Sigmoid colon (tissue), 7 donors: ENCODE measurements at regions of chr6 and their contacts with region 1.

Region 1: DNA sequence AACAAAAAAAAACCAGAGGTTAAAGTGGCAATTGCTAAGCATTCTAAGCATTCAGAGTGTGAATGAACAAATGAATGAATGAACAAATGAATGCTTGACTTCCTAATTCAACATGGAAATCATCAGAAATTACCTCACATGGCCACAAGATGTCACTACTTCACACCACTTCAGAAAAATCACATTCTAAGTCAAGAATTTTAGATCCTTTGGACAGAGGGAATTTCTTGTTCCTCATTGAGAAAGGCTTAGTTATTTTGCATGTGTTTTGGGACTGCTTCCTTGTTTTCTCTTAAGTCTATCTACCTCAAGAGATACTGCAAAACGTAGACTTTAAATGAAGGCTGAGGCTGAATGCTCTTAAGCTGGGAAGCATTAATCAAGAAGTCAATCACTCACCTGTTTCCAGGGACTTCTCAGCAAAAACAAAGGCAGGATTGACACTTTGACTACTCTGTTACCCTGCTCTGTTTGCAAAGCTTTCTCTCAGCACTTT is 120.2 kb downstream of the MBOAT1 start:
- DNase-seq: no peak
- H3K4me3 ChIP-seq: no peak overlapping the region
- H3K27ac ChIP-seq: no peak overlapping the region
- H3K4me1 ChIP-seq: peaks cover 0 to 10% (median under 1%) of the 10 kb centered on the region in 4 donors
- H3K27me3 ChIP-seq: no peaks in the 10 kb centered on the region
- CTCF ChIP-seq: peak; percentile 63 to 83 (median 70)
- EP300 ChIP-seq: no peak
- POLR2A ChIP-seq: no peak

Region 2: DNA sequence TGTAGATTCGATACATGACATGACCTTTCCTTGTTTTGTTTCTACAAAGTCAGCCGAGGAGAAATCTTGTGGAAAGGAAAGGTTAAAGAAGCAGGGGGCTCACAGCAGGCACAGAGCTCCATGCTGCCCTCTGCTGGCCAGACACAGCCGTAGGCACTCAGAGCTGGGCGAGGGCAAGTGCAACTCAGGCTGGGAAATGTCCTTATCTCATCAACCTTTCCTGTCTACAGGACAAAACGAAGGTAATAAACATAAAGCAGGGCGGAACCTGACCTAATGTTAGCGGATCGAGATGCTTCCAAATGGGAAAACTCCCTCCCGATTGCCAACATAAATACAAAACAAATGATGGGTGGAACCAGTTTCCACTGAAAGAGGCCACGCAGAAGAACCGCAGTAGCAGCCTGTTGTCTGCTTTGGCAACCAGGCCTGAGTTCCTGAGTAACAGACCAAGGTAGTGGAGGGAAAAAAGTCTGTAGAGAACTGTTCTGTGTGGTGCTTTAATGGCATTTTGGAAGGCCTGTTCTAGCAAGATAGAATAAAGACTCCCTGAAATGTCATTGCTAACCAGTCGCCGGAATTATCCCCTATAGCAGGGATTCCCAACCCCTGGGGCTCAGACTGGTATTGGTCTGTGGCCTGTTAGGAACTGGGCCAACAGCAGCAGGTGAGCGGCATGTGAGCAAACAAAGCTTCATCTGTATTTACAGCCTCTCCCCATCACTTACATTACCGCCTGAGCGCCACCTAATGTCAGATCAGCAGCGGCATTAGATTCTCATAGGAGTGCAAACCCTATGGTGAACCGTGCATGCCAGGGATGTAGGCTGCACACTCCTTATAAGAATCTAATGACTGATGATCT is 34.9 kb after region 1 on chr6:
- intact Hi-C with region 1: loop called (anchors 1 kb)
- DNase-seq: peak; percentile 80
- H3K4me3 ChIP-seq: no peak overlapping the region
- H3K27ac ChIP-seq: peak overlapping the region; percentile 29 to 79 (median 61)
- H3K4me1 ChIP-seq: peaks cover 0 to 50% (median 20%) of the 10 kb centered on the region in 4 donors
- H3K27me3 ChIP-seq: no peaks in the 10 kb centered on the region
- CTCF ChIP-seq: peak; percentile 73 to 95 (median 86)
- EP300 ChIP-seq: no peak
- POLR2A ChIP-seq: no peak

Region 3: GRCh38 chr6:20291764-20292580 is 199.9 kb after region 1 on chr6:
- intact Hi-C with region 1: loop called (anchors 5 kb)
- DNase-seq: peak; percentile 84
- H3K4me3 ChIP-seq: no peak overlapping the region
- H3K27ac ChIP-seq: no peak overlapping the region
- H3K4me1 ChIP-seq: peaks cover 0 to 6% (median 0%) of the 10 kb centered on the region in 4 donors
- H3K27me3 ChIP-seq: no peaks in the 10 kb centered on the region
- CTCF ChIP-seq: peak; percentile 75 to 95 (median 88)
- EP300 ChIP-seq: no peak
- POLR2A ChIP-seq: no peak

Region 4: DNA sequence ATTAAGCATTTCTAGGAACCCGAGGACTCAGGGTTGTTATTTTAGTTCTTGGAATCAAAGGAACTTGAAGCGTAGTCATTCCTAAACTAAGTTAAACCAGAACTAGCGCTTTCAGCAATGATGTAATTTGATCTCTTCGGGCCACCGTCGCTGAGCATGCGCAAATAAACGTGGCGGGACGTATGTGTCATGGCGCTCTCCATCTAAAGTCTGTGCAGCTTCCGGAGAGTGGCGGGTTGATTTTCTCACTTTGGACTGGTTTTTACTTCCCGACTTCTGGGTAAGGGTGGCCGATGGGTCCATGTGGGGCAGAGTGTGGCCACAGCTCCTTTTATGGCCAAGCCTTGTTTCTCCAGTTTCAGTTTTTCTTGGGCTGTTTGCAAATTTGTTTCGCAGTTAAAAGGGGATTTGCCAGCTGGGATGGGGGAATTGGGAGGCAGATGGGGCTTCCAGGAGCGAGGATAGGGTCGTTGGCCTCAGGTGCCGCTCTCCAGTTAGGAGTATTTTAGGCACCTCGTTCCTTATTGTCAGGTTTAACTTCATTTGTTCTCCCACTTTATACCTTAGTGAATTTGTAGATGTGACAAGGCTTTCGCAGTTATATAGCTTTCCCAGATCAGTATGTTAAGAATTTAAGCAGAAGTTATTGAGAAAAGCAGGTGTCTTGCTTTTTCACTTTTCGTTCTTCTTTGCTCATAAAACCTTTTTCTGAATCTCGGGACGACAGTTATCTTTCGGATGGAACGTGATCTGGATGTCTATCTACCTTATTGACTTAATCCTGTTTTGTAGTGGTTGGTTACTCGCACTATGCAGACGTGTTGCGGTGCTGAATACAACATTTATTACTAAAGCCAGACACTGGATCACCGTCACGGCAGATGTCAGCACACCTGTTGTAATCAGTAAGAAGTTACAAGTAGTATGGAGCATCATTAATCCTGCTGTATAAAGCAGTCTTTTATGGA is 442.5 kb after region 1 on chr6 and contains the start of gene CDKAL1:
- intact Hi-C with region 1: loop called (anchors 2 kb)
- DNase-seq: peak; percentile 95
- H3K4me3 ChIP-seq: peak within 1 kb of the TSS; percentile 72 to 79 (median 78)
- H3K27ac ChIP-seq: peak within 1 kb of the TSS; percentile 86 to 90 (median 88)
- H3K4me1 ChIP-seq: peaks cover 0 to 27% (median 15%) of the 10 kb centered on the region in 4 donors
- H3K27me3 ChIP-seq: no peaks in the 10 kb centered on the region
- CTCF ChIP-seq: no peak
- EP300 ChIP-seq: no peak
- POLR2A ChIP-seq: peak in 1 of 2 donors; percentile 20
- total RNA-seq, gene CDKAL1: 11.4 to 14.7 (median 13.6) TPM